Activated naive CD4-positive, alpha-beta T cell treated with anti-CD3 and anti-CD28 coated beads for 36 hours (primary cell): ENCODE measurements at regions of chr5 and their contacts with region 1.

Region 1: DNA sequence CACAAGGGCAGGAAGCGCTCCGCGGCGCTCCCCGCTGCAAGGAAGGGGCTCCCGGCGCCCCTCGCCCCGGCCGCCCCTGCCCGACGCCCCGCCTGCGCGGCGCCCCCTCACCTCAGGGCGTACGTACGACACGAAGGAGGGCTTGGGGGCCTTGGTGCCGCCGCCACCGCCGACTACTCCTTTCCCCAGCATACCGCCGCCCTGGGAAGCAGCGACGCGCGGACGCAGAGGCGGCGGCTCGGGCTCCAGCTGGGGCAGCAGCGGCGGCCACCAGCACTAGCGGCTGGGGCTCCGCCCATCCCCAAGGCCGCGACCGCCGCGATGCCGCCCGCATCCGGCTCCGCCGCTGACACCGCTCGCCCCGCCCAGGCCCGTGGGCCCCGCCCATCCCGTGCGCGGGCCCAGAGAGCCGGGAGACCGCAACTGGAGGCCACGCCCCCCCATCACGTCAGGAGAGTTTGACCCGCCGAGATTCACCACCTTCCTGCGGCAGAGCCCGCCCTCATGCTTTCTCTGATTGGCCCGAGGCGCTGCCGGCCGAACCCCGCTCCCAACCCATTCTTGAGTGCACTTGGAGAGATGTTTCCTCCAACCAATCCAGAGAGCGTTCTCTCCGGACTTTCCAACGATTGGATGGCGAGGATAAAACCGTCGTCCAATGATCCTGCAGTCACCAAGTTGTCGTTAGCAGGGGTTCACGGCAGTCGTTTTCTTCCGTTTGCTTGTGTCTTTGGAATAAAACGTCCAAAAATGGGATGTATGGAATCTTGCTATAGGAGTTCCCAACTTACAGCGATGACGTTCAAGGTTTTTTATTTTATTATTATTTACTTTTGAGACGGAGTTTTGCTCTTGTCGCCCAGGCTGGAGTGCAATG is at the start of gene MTMR12:
- DNase-seq: peak; percentile 100
- H3K4me3 Mint-ChIP-seq: peak within 1 kb of the TSS; percentile 84
- H3K27ac Mint-ChIP-seq: peak within 1 kb of the TSS; percentile 84
- H3K4me1 Mint-ChIP-seq: peaks cover 27% of the 10 kb centered on the region
- H3K27me3 Mint-ChIP-seq: no peaks in the 10 kb centered on the region
- total RNA-seq, gene MTMR12: 14.1 to 16.0 TPM

Region 2: DNA sequence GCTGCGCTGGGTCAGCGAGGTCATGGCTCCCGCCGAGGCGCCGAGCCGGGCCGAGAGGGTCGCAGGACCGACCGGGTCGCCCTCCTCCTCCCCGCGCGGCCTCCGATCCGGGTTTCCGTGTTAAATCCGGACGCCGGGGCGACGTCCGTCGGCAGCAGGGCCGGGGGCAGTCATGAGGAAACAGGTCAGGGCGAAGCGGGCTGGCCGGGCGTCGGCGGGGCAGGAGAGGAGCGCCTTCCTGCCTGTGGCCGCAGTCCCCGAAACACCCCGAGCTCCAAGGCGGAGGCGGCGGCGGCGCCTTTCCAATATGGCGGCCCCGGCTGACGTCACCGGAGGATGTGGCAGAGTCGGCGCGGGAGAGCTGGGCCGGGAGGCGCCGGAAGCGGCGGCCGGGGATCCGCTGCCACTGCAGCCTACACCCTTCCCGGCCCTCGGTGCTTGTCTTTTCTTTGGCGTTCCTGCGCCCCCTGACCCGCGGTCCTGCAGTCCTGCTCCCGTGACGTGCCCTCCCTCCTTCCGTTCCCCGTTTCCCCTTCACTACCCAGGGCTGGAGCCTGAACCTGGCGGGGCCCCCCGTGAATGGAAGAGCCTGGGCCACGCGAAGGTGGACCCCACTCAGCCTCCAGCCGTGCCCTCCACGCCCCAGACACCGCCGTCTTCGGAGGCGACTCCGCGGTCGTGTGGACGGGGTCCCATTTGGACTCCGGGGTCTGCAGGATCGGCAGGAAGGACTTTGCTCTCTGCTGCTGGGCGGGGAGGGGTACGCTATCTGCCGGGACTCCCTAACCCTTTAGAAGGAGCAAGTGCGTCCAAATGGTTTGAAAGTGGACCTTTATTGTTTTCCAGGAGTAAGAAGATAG is 138.6 kb before region 1 on chr5 and contains the start of gene GOLPH3:
- CTCF ChIA-PET with region 1: no interaction called
- intact Hi-C with region 1: loop called (anchors 1 kb)
- DNase-seq: peak; percentile 96
- H3K4me3 Mint-ChIP-seq: peak within 1 kb of the TSS; percentile 99
- H3K27ac Mint-ChIP-seq: peak within 1 kb of the TSS; percentile 95
- H3K4me1 Mint-ChIP-seq: peaks cover 32% of the 10 kb centered on the region
- H3K27me3 Mint-ChIP-seq: no peaks in the 10 kb centered on the region
- total RNA-seq, gene GOLPH3: 38.2 to 41.5 TPM

Region 3: GRCh38 chr5:32276173-32276853 is 36.6 kb before region 1 on chr5:
- CTCF ChIA-PET with region 1: no interaction called
- intact Hi-C with region 1: loop called (anchors 1 kb)
- DNase-seq: no peak
- H3K4me3 Mint-ChIP-seq: no peak overlapping the region
- H3K27ac Mint-ChIP-seq: peak overlapping the region; percentile 77
- H3K4me1 Mint-ChIP-seq: peaks cover 52% of the 10 kb centered on the region
- H3K27me3 Mint-ChIP-seq: no peaks in the 10 kb centered on the region

Region 4: DNA sequence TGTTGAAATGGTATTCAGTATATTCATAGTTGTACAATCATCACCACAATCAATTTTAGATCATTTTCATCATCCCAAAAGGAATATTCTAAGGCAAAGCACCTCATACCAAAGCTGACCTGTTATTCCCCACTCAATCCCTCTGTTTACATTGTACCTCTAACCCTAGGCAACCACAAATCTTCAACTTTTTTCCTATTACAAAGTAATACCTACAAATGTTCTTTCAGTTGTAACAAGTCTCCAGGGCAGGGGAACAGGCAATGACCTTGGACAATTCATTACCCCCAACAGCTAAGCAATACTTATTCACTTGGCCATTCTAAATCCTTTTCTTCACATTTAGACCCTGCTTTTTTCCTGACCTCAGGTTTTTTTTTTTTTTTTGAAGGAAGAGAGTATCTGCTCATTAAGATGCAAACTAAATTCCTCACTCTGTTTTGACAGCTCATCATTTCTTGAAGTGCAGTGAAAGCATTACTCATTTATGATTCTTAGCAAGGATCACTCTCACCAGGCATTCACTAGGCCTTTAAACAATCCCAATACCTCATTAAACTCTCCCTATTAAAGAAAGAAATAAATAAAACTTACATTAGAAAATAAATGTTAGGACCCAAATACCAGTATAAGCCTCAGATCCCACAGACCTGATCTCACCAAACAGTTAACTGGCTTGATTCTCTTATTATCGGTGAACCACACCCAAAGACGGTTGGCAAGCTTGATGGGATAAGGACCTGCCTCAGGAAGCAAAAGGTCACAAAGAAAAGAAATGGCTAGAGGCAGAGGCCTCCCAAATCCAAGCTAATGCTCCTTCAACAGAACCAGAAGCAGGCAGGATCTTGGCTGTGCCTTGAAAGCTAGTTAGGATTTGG is 15.5 kb before region 1 on chr5:
- CTCF ChIA-PET with region 1: no interaction called
- intact Hi-C with region 1: loop called (anchors 1 kb)
- DNase-seq: no peak
- H3K4me3 Mint-ChIP-seq: no peak overlapping the region
- H3K27ac Mint-ChIP-seq: peak overlapping the region; percentile 27
- H3K4me1 Mint-ChIP-seq: peaks cover 28% of the 10 kb centered on the region
- H3K27me3 Mint-ChIP-seq: no peaks in the 10 kb centered on the region